ENCODE measurements at regions of chrX and their contacts with region 1.

Region 1: DNA sequence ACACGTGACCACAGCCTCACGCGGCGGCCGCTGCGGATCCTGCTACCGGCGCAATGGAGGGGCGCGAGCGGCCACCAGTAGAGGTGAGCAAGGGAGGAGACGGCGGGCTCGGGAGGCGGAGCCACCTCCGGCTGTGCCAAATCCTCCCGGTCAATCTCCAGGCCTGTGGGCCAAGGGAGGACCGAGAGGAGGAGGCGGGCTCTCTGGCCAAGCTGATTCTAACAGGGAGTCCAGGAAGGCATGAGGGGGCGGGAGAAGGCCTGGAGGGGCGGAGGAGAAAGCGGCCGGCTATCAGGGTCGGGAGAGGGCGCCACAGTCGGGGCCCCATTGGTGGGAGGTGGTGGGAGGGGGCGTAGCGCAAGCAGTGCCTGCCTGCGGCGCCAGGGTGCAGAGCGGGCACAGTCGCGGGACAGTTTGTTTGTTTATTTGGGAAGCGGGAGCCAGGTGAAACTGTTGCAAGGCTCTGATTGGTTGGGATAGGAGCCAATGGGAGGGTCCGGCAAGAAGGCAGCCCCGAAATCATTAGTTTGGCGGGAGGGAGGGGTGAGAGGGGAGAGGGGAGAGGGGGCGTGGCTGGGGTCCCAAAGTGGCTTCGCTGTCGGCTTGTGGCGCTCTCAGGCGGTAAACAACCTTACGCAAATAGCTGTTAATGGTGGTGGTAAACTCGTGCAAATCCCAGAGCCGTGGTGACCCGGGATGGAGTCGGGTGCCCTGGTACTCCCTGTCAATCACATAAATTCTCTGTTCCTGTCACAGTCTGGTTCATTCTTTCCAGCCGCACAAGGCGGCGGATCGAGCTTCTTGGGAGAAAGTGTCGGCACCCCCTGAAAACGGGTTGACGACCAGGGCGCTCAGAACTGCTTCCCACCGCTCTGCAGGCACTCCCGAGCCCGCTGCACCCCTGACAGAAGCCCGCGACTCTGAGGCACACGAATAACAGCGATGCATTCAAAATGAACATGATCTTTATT is at the start of gene IRS4:
- DNase-seq: peak; percentile 66

Region 2: DNA sequence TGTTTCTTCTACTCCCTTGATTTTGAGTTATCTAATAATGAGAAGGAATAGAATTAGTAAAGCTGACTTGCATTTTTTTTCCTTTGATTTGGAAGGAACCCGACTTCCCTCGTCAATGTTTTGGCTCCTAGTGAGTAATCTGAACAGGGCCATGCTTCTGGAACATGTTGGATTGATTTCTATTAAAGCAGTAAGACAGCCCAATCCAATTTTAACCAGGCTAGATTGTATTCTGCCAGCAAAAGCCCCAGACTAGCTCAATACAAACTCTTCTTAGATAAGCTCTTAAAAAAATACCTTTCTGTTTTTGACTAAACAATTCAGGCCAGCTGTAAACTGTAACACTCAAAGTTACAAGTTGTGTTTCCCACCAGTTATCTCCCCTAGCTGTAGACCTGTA is 126.7 kb before region 1 on chrX:
- CTCF ChIA-PET with region 1: no interaction called
- POLR2A ChIA-PET with region 1: no interaction called
- DNase-seq: no peak

Region 3: GRCh38 chrX:108726748-108727147 is 10.0 kb before region 1 on chrX:
- CTCF ChIA-PET with region 1: interaction called, 7 read pairs
- POLR2A ChIA-PET with region 1: interaction called, 10 read pairs
- DNase-seq: no peak